ENCODE measurements at regions of chr12 and their contacts with region 1.

Region 1: GRCh38 chr12:14995583-14996425 is 23.0 kb downstream of the PDE6H start:
- DNase-seq: no peak
- ATAC-seq: peak; percentile 35
- H3K4me3 Mint-ChIP-seq: no peak overlapping the region
- H3K27ac Mint-ChIP-seq: peak overlapping the region; percentile 24
- H3K4me1 Mint-ChIP-seq: peaks cover 48% of the 10 kb centered on the region
- H3K27me3 Mint-ChIP-seq: peaks cover 9% of the 10 kb centered on the region
- CTCF ChIP-seq: peak; percentile 46

Region 2: DNA sequence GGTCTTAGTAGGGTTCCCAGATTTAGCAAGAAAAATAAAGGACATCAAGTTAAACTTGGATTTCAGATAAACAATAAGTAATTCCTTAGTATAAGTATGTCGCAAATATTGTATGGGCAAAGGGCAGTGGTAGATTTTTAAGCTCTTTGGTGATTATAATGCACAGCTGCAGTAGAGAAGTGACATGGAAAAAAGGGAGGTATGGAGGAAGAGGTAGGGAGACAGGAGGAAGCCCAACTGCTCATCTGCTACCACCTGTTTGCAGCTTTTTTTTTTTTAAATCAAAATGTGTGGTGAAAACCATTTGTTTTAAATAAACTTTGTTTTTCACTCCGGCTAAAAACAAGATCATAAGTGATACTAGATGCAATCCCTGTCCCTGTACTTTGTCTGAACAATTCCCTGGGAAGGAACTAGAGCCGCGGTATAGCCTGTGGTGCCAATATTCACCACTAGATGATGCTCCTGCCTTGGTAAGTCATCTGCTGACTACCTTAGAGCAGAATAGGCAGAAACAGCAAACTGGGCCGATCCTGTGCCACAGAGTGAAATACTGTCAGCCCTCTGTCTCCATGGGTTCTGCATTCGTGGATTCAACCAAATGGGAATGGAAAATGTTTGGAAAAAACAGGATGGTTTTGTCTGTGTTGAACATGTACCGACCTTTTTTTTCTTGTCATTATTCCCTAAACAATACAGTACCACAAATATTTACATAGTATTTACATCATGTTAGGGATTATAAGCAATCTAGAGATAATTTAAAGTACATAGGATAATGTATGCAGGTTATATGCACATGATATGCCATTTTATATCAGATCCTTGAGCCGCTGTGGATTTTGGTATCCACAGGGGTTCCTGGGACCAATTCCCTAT is 365.7 kb before region 1 on chr12:
- CTCF ChIA-PET with region 1: interaction called, 6 read pairs
- POLR2A ChIA-PET with region 1: no interaction called
- intact Hi-C with region 1: loop called (anchors 1 kb)
- DNase-seq: peak; percentile 31
- ATAC-seq: peak; percentile 100
- H3K4me3 Mint-ChIP-seq: no peak overlapping the region
- H3K27ac Mint-ChIP-seq: no peak overlapping the region
- H3K4me1 Mint-ChIP-seq: peaks cover 3% of the 10 kb centered on the region
- H3K27me3 Mint-ChIP-seq: no peaks in the 10 kb centered on the region
- CTCF ChIP-seq: peak; percentile 89

Region 3: DNA sequence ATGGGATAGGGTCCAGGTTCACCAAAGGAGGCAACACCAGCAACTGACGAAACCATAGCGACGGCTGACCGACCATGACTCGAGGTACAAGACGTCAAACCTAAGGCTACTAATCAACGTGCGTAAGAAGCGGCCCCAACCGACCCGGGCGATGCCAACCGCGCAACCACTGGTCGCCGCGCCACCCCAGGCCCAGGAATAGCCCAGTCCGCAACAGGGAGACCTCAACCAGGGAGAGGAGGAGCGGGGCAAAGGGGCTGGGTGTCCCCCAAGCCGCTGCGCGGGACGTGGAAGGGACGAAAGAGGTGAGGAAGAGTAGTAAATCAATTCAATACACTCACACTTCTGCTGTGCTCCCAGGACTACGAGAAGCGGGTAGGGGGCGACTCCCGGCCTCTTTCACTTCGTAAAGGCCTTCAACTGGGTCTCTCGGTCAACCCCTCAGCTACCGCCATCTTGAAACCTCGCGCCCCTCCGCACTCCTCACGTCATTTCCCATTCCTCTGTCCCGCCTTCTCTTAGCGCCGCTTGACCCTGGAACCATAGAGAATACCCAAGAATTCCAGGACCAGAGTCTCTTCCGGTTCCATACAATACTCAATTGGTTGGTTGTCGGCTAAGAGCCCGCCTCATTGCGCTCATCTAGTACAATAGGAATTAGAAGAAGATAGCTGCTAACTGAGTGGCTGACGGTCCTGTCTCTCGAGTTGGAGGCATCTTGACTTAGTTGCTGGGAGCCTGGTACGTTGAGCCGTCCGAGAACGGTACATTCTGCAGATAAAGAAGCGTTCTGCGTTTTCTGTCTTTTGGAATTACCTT is 192.6 kb before region 1 on chr12 and contains the starts of genes C12orf60 and WBP11:
- CTCF ChIA-PET with region 1: interaction called, 4 read pairs
- POLR2A ChIA-PET with region 1: interaction called, 7 read pairs
- intact Hi-C with region 1: loop called (anchors 1 kb)
- DNase-seq: peak; percentile 74
- ATAC-seq: peak; percentile 95
- H3K4me3 Mint-ChIP-seq: no peak within 1 kb of the TSS
- H3K27ac Mint-ChIP-seq: no peak within 1 kb of the TSS
- H3K4me1 Mint-ChIP-seq: peaks cover 17% of the 10 kb centered on the region
- H3K27me3 Mint-ChIP-seq: no peaks in the 10 kb centered on the region
- CTCF ChIP-seq: no peak
- total RNA-seq, gene C12orf60: 0.64 and 0.69 TPM in 2 replicates
- total RNA-seq, gene WBP11: 86.3 and 89.4 TPM in 2 replicates

Region 4: DNA sequence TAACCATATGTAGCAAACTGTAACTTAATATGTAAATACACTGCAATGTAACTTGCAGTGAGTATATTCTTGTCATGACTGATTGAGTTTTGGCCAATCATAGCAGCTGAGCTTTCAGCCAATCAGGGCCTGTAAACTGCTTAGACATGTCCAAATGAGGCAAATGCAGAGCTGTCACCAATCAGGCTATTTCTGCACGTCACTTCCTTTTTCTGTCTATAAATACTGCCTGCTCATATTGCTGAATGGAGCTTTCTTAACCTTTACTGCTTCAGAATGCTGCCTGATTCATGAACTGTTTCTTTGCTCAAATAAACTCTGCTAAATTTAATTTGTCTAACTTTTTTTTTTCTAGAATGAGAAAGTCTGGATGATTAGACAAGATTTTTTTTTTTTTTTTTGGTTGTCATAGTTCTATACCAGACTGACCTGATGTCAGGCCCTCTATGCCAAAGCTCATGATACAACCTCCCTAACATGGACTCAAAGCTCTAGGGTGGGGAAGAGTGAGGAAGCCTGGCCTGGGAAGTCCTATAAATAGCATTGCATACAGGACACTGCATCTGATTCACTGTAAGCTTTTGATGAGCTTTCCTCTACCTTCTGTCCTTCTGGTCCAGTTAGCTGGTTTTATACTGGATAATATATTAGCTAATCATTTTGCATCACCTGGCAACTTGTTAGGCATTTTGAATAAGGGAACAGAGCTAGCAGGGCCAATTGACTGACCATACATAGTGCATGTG is 122.2 kb before region 1 on chr12:
- CTCF ChIA-PET with region 1: no interaction called
- POLR2A ChIA-PET with region 1: no interaction called
- intact Hi-C with region 1: no loop called
- DNase-seq: no peak
- ATAC-seq: no peak
- H3K4me3 Mint-ChIP-seq: no peak overlapping the region
- H3K27ac Mint-ChIP-seq: no peak overlapping the region
- H3K4me1 Mint-ChIP-seq: no peaks in the 10 kb centered on the region
- H3K27me3 Mint-ChIP-seq: no peaks in the 10 kb centered on the region
- CTCF ChIP-seq: no peak

Region 5: GRCh38 chr12:14937689-14938088 is 58.1 kb before region 1 on chr12:
- CTCF ChIA-PET with region 1: interaction called, 31 read pairs
- POLR2A ChIA-PET with region 1: interaction called, 4 read pairs
- intact Hi-C with region 1: loop called (anchors 1 kb)
- DNase-seq: no peak
- ATAC-seq: peak; percentile 41
- H3K4me3 Mint-ChIP-seq: no peak overlapping the region
- H3K27ac Mint-ChIP-seq: peak overlapping the region; percentile 91
- H3K4me1 Mint-ChIP-seq: peaks cover 37% of the 10 kb centered on the region
- H3K27me3 Mint-ChIP-seq: no peaks in the 10 kb centered on the region
- CTCF ChIP-seq: no peak

Region 6: DNA sequence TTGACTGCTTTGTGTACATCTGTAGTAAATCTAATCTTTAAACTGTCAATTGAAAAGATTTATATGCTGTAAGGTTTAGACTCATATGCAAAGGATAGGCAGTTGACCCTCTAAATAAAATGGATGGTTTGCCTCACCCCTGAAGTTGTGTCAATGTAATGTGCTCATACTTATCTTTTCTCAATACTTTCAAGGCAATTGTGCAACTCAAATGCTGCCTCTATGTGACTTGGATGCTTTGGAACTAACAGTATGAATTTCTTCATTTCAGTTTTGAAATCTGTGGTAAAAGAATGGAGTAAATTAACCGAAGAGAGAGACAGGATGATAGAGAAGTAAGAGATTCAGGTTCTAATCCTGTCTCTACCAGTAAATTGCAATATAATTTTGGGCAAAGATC is 13.2 kb before region 1 on chr12:
- CTCF ChIA-PET with region 1: interaction called, 13 read pairs
- POLR2A ChIA-PET with region 1: no interaction called
- intact Hi-C with region 1: no loop called
- DNase-seq: no peak
- ATAC-seq: no peak
- H3K4me3 Mint-ChIP-seq: no peak overlapping the region
- H3K27ac Mint-ChIP-seq: peak overlapping the region; percentile 76
- H3K4me1 Mint-ChIP-seq: peaks cover 47% of the 10 kb centered on the region
- H3K27me3 Mint-ChIP-seq: no peaks in the 10 kb centered on the region
- CTCF ChIP-seq: no peak

Region 7: DNA sequence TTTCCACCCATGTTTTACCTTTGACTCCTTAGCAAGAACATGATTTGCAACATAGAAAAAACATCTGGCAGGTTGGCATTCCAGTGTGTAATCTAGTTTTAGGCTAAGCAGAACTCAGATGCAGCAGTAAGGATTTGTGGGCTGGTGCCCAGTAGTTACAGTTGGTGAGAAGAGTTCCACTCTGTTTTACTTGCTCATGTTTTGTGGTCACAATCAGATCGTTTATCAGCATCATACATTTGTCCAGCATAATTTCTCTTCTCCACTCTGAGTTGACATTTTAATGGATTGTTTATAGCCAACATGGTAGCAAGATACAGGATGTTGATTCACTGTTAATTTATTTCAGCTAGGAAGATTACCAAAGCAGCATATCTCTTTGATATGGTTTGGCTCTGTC is 97.0 kb after region 1 on chr12:
- CTCF ChIA-PET with region 1: no interaction called
- POLR2A ChIA-PET with region 1: no interaction called
- intact Hi-C with region 1: no loop called
- DNase-seq: no peak
- ATAC-seq: no peak
- H3K4me3 Mint-ChIP-seq: no peak overlapping the region
- H3K27ac Mint-ChIP-seq: no peak overlapping the region
- H3K4me1 Mint-ChIP-seq: no peaks in the 10 kb centered on the region
- H3K27me3 Mint-ChIP-seq: peaks cover 11% of the 10 kb centered on the region
- CTCF ChIP-seq: no peak

Region 8: DNA sequence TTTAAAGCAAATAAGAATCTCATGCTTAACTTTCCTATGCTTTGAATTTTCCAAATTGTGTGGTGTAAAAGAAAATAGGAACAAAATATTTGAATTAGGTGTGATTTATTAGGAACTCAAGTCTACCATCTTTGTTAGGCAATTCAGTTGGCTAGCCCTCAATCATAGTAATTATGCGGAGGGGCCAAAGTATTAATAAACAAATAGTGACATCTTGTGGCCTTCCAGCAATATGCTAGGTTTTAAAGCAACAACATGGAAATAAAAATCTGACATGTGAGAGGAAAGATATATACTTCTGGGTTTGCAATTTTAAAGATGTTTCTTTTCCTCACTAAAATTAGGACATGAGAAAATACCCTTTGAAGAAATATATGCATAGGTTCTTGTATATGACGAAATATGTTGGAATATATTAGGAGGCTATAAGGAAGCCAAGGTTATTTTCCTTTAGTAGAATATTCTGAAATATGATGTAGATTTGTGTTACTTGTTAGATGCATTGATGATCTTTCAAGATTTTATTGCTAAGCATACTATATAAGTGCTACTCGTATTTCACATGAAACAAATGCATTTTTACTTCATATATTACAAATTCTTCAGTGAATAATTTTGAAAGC is 526.9 kb after region 1 on chr12:
- CTCF ChIA-PET with region 1: no interaction called
- POLR2A ChIA-PET with region 1: no interaction called
- intact Hi-C with region 1: loop called (anchors 10 kb)
- DNase-seq: no peak
- ATAC-seq: no peak
- H3K4me3 Mint-ChIP-seq: no peak overlapping the region
- H3K27ac Mint-ChIP-seq: no peak overlapping the region
- H3K4me1 Mint-ChIP-seq: peaks cover 12% of the 10 kb centered on the region
- H3K27me3 Mint-ChIP-seq: peaks cover 15% of the 10 kb centered on the region
- CTCF ChIP-seq: no peak

Measured in activated B cell treated with CpG ODN at 0.5 μM for 24 hours (primary cell).